Endothelial cell of umbilical vein (primary cell): ENCODE measurements at regions of chr6 and their contacts with region 1.

Region 1: GRCh38 chr6:52104780-52105378 is 17.5 kb upstream of the PKHD1 start:
- DNase-seq: no peak
- H3K4me3 ChIP-seq: no peak overlapping the region
- H3K27ac ChIP-seq: no peak overlapping the region
- H3K4me1 ChIP-seq: no peaks in the 10 kb centered on the region
- H3K27me3 ChIP-seq: no peaks in the 10 kb centered on the region
- CTCF ChIP-seq: no peak
- POLR2A ChIP-seq: no peak

Region 2: GRCh38 chr6:52130440-52130839 is 25.6 kb after region 1 on chr6:
- CTCF ChIA-PET with region 1: no interaction called
- POLR2A ChIA-PET with region 1: no interaction called
- dilution Hi-C with region 1: no loop called
- intact Hi-C with region 1: no loop called
- DNase-seq: no peak
- H3K4me3 ChIP-seq: no peak overlapping the region
- H3K27ac ChIP-seq: no peak overlapping the region
- H3K4me1 ChIP-seq: no peaks in the 10 kb centered on the region
- H3K27me3 ChIP-seq: peaks cover 0 to 3% of the 10 kb centered on the region in 2 experiments
- CTCF ChIP-seq: no peak
- POLR2A ChIP-seq: no peak

Region 3: GRCh38 chr6:52946306-52946705 is 841.4 kb after region 1 on chr6:
- CTCF ChIA-PET with region 1: no interaction called
- POLR2A ChIA-PET with region 1: no interaction called
- dilution Hi-C with region 1: no loop called
- intact Hi-C with region 1: loop called (anchors 5 kb)
- DNase-seq: no peak
- H3K4me3 ChIP-seq: no peak overlapping the region
- H3K27ac ChIP-seq: no peak overlapping the region
- H3K4me1 ChIP-seq: no peaks in the 10 kb centered on the region
- H3K27me3 ChIP-seq: peaks cover 8 to 9% of the 10 kb centered on the region in 2 experiments
- CTCF ChIP-seq: no peak
- POLR2A ChIP-seq: no peak